MCF 10A (cell line): ENCODE measurements at regions of chr9 and their contacts with region 1.

Region 1: DNA sequence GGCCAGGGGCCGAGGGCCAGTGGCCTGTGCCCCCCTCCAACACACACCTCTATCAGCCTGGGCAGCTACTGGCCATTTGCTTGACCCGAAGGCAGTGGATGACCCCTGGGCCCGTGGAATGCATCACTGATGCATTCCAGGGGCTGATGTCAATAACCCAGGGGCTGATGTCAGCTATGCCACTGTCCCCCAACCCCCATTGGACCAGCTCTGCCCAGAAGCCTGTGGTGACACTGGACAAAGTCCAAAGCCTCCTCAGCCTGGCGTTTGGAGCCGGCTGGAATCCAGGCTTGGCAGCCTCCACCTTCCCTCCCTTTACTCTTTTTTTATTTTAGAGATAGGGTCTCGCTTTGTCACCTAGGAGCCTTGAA is 6.0 kb downstream of the KYAT1 start:
- DNase-seq: no peak
- H3K4me3 Mint-ChIP-seq: no peak overlapping the region
- H3K27ac Mint-ChIP-seq: no peak overlapping the region
- H3K4me1 Mint-ChIP-seq: peaks cover 23% of the 10 kb centered on the region
- H3K27me3 Mint-ChIP-seq: no peaks in the 10 kb centered on the region
- CTCF ChIP-seq: no peak

Region 2: GRCh38 chr9:128835246-128836210 is 40.2 kb before region 1 on chr9:
- CTCF ChIA-PET with region 1: no interaction called
- POLR2A ChIA-PET with region 1: no interaction called
- intact Hi-C with region 1: no loop called
- DNase-seq: no peak
- H3K4me3 Mint-ChIP-seq: no peak overlapping the region
- H3K27ac Mint-ChIP-seq: no peak overlapping the region
- H3K4me1 Mint-ChIP-seq: no peaks in the 10 kb centered on the region
- H3K27me3 Mint-ChIP-seq: no peaks in the 10 kb centered on the region
- CTCF ChIP-seq: no peak

Region 3: GRCh38 chr9:128863647-128864046 is 12.1 kb before region 1 on chr9:
- CTCF ChIA-PET with region 1: interaction called, 20 read pairs
- POLR2A ChIA-PET with region 1: interaction called, 6 read pairs
- intact Hi-C with region 1: loop called (anchors 2 kb)
- DNase-seq: peak; percentile 77
- H3K4me3 Mint-ChIP-seq: no peak overlapping the region
- H3K27ac Mint-ChIP-seq: no peak overlapping the region
- H3K4me1 Mint-ChIP-seq: peaks cover 14% of the 10 kb centered on the region
- H3K27me3 Mint-ChIP-seq: no peaks in the 10 kb centered on the region
- CTCF ChIP-seq: peak; percentile 95